ENCODE measurements at regions of chr5 and their contacts with region 1.

Region 1: GRCh38 chr5:141701360-141702119 is 19.5 kb upstream of the ARAP3 start:
- DNase-seq: peak in 1 of 2 donors; percentile 42
- ATAC-seq: peak in 5 of 8 donors; percentile 34 to 64 (median 45)
- H3K4me3 ChIP-seq: peak overlapping the region in 9 of 10 donors; percentile 39 to 69 (median 58)
- H3K27ac ChIP-seq: peak overlapping the region in 4 of 10 donors; percentile 16 to 66 (median 32)
- H3K4me1 ChIP-seq: peaks cover 3 to 24% (median 16%) of the 10 kb centered on the region in 9 donors
- H3K27me3 ChIP-seq: peaks cover 0 to 72% (median 22%) of the 10 kb centered on the region in 7 donors
- CTCF ChIP-seq: no peak

Region 2: GRCh38 chr5:141747152-141748141 is 45.9 kb after region 1 on chr5:
- intact Hi-C with region 1: loop called in 2 of 10 experiments (anchors 5 to 10 kb)
- DNase-seq: peak; percentile 88 to 90
- ATAC-seq: peak; percentile 86 to 97 (median 93)
- H3K4me3 ChIP-seq: no peak overlapping the region
- H3K27ac ChIP-seq: no peak overlapping the region
- H3K4me1 ChIP-seq: peaks cover 0 to 12% (median 5%) of the 10 kb centered on the region in 9 donors
- H3K27me3 ChIP-seq: peaks cover 0 to 29% (median 10%) of the 10 kb centered on the region in 7 donors
- CTCF ChIP-seq: no peak

Region 3: GRCh38 chr5:141805874-141806595 is 104.5 kb after region 1 on chr5:
- intact Hi-C with region 1: loop called in 7 of 10 experiments (anchors 5 to 10 kb)
- DNase-seq: peak; percentile 29 to 74
- ATAC-seq: peak; percentile 75 to 93 (median 91)
- H3K4me3 ChIP-seq: no peak overlapping the region
- H3K27ac ChIP-seq: peak overlapping the region; percentile 59 to 93 (median 81)
- H3K4me1 ChIP-seq: peaks cover 16 to 67% (median 48%) of the 10 kb centered on the region in 9 donors
- H3K27me3 ChIP-seq: peaks cover 0 to 56% (median 18%) of the 10 kb centered on the region in 7 donors
- CTCF ChIP-seq: peak in 1 of 9 donors; percentile 31

Region 4: GRCh38 chr5:141825791-141826560 is 124.4 kb after region 1 on chr5:
- intact Hi-C with region 1: loop called in 1 of 10 experiments (anchors 10 kb)
- DNase-seq: no peak
- ATAC-seq: peak in 1 of 8 donors; percentile 34
- H3K4me3 ChIP-seq: no peak overlapping the region
- H3K27ac ChIP-seq: peak overlapping the region in 9 of 10 donors; percentile 27 to 73 (median 52)
- H3K4me1 ChIP-seq: peaks cover 6 to 52% (median 23%) of the 10 kb centered on the region in 9 donors
- H3K27me3 ChIP-seq: peaks cover 0 to 5% (median 0%) of the 10 kb centered on the region in 7 donors
- CTCF ChIP-seq: peak in 7 of 9 donors; percentile 20 to 57 (median 37)

Region 5: GRCh38 chr5:142145106-142145900 is 443.8 kb after region 1 on chr5:
- intact Hi-C with region 1: loop called in 5 of 10 experiments (anchors 10 kb)
- DNase-seq: peak in 1 of 2 donors; percentile 80
- ATAC-seq: peak; percentile 71 to 91 (median 84)
- H3K4me3 ChIP-seq: no peak overlapping the region
- H3K27ac ChIP-seq: no peak overlapping the region
- H3K4me1 ChIP-seq: peaks cover 0 to 8% (median 0%) of the 10 kb centered on the region in 9 donors
- H3K27me3 ChIP-seq: no peaks in the 10 kb centered on the region
- CTCF ChIP-seq: peak; percentile 59 to 80 (median 72)